Transverse colon (tissue), 4 donors: ENCODE measurements at regions of chr12 and their contacts with region 1.

Region 1: DNA sequence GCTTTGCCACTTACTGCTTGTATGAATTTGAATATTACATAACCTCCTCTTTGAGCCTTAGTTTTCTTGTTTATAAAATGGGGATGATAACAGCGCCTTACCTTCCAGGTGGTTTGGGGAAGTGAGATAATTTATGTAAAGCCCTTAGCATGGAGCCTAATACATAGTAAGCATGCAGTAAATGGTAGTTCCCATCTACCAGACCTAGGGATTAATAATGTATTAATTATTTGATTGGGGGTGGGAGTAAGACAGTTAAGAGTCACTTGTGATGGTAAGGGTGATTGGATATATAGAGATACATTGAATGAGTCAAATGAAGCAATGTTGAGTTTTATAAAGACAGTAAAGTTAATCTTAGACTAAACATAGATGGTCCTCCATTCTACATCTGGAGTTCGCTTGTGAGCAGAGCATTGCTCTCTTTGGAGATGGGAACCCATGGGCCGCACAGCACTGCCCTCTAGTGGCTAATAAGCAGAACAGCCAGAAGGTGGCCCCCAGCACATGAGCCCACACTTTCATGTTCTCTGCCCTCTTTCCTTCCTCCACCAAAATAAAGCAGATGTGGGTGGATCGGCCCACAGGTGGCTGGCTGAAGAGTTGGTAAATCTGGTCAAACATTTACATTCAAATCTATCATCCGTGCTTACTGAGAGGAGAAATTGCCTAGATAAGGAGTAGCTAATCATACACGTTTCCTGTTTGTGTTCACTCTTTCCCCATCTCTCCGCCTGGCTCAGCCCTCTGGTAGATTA is 26.5 kb upstream of the TAMALIN start:
- DNase-seq: peak; percentile 72
- H3K4me3 ChIP-seq: no peak overlapping the region
- H3K27ac ChIP-seq: no peak overlapping the region
- H3K4me1 ChIP-seq: peaks cover 0 to 4% (median 0%) of the 10 kb centered on the region in 4 donors
- H3K27me3 ChIP-seq: no peaks in the 10 kb centered on the region
- CTCF ChIP-seq: peak; percentile 94 to 98 (median 96)
- EP300 ChIP-seq: no peak
- POLR2A ChIP-seq: no peak

Region 2: GRCh38 chr12:51886021-51886322 is 94.3 kb before region 1 on chr12:
- in situ Hi-C with region 1: no loop called
- intact Hi-C with region 1: loop called (anchors 5 kb)
- DNase-seq: peak; percentile 51
- H3K4me3 ChIP-seq: no peak overlapping the region
- H3K27ac ChIP-seq: peak overlapping the region; percentile 44 to 67 (median 64)
- H3K4me1 ChIP-seq: peaks cover 0 to 13% (median 7%) of the 10 kb centered on the region in 4 donors
- H3K27me3 ChIP-seq: peaks cover 3% of the 10 kb centered on the region
- CTCF ChIP-seq: no peak
- EP300 ChIP-seq: peak; percentile 21
- POLR2A ChIP-seq: no peak

Region 3: DNA sequence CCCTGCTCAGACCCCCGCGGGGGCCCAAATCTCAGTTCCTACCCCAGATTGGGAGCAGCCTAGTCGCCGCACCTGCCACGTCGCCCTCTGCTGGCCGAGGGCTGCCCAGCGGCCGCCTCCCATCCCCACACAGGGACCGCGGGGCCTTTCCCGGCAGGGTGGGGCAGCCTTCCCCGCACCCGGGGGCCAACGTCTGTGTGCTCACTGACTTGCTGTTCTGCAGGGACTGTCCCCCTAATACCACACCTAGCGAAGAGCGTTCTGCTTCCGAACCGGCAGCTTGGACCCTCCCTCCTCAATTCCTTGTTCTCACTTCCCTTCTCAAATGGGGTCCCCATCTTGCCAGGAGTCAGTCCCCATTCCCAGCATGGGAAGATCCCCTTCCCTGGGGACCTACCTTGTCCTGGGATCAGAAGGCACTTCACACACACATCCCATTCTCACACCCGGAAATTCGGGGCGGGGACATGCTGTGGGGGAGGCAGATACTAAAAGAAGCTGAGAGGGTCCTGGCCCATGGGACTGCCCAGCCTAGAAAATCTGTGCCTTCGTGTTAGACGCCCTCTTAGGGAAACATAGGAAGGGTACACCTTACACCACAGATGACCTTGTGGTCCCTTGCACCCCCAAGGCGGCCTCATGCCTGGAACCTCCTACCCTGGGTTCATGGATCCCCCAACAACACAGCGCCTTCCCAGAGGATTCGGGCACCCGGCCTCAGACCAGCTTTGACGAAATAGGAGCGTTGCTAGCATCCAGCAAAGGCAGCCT is 56.5 kb before region 1 on chr12:
- in situ Hi-C with region 1: loop called in 3 of 4 experiments (anchors 5 to 10 kb)
- intact Hi-C with region 1: loop called (anchors 2 kb)
- DNase-seq: peak; percentile 72
- H3K4me3 ChIP-seq: no peak overlapping the region
- H3K27ac ChIP-seq: peak overlapping the region; percentile 73 to 80 (median 74)
- H3K4me1 ChIP-seq: peaks cover 4 to 22% (median 14%) of the 10 kb centered on the region in 4 donors
- H3K27me3 ChIP-seq: no peaks in the 10 kb centered on the region
- CTCF ChIP-seq: peak; percentile 78 to 90 (median 86)
- EP300 ChIP-seq: no peak
- POLR2A ChIP-seq: peak; percentile 10